Activated naive CD4-positive, alpha-beta T cell treated with anti-CD3 and anti-CD28 coated beads, Interleukin-2, amount 10 ng/mL, durations not matched to agents 7 days and 5 days (primary cell): ENCODE measurements at regions of chr19 and their contacts with region 1.

Region 1: GRCh38 chr19:45339629-45340028 is 921 bp upstream of the KLC3 start:
- DNase-seq: no peak
- H3K4me3 Mint-ChIP-seq: no peak overlapping the region
- H3K27ac Mint-ChIP-seq: no peak overlapping the region
- H3K4me1 Mint-ChIP-seq: peaks cover 10% of the 10 kb centered on the region
- H3K27me3 Mint-ChIP-seq: peaks cover 33% of the 10 kb centered on the region

Region 2: DNA sequence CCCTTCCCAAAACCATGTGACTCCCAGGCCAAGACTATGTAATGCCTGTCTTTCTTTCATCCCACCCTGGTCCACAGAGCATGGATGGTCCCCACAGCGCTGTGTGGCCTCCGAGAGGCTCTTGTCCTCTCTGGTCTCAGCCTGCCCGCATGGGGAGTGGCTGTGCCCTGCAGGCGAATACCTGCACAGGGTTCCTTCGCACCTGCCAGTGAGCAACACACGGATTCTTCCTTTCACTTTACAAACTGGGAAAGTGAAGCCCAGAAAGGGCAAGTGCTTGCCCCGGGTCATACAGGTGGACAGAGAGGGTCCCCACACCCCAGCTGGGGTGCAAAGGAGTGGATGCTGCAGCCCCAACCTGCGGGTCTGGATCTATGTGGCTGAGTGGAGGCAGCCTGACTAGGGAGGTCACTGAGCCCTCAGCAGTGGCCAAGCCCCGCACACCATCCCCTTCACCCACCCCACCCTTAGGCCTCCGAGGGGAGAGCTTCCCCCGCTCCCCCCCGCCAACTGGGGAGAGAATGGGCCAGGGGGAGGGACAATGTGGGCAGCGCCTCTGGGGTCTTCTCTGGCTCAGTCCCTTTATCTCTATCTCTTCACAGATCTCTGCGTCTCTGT is 89.3 kb before region 1 on chr19:
- CTCF ChIA-PET with region 1: interaction called, 10 read pairs
- DNase-seq: no peak
- H3K4me3 Mint-ChIP-seq: peak overlapping the region; percentile 68
- H3K27ac Mint-ChIP-seq: peak overlapping the region; percentile 37
- H3K4me1 Mint-ChIP-seq: peaks cover 36% of the 10 kb centered on the region
- H3K27me3 Mint-ChIP-seq: peaks cover 34% of the 10 kb centered on the region

Region 3: DNA sequence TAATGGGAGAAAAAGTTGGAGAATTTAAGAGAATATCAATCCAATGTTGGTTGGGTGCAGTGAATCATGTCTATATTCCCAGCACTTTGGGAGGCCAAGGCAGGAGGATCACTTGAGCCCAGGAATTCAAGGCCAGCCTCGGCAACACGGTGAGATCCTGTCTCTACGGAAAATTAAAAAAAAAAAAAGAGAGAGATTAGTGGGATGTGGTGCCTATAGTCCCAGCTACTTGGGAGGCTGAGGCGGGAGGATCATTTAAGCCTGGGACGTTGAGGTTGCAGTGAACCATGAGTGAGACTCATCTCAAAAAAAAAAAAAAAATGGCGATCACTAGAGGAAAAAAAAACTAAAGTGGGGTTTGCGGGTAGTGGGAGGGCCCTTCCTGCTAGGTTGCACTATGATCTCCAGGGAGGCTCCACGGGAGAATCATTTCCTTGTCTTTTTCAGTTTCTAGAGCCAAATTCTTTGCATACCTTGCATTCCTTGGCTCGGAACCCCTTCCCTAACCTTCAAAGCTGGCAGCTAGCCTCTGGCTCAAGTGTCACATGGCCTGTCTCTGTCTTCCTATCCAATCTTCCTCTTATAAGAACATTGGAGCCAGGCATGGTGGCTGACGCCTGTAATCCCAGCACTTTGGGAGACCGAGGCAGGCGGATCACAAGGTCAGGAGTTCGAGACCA is 36.6 kb after region 1 on chr19:
- CTCF ChIA-PET with region 1: no interaction called
- DNase-seq: no peak
- H3K4me3 Mint-ChIP-seq: no peak overlapping the region
- H3K27ac Mint-ChIP-seq: no peak overlapping the region
- H3K4me1 Mint-ChIP-seq: no peaks in the 10 kb centered on the region
- H3K27me3 Mint-ChIP-seq: peaks cover 14% of the 10 kb centered on the region